Activated T-helper 2 cell treated with anti-CD3 and anti-CD28 coated beads, Interferon-gamma antibody, Interleukin-2, Interleukin-4, amounts not matched to agents 10 μg/mL and 5 μg/mL and 100 μg/mL, durations not matched to agents 14 hours and 24 hours and 36 hours (primary cell): ENCODE measurements at regions of chr6 and their contacts with region 1.

Region 1: GRCh38 chr6:111533087-111533784 is 50.2 kb upstream of the REV3L start:
- DNase-seq: peak; percentile 43
- H3K4me3 Mint-ChIP-seq: peak overlapping the region; percentile 30
- H3K27ac Mint-ChIP-seq: peak overlapping the region; percentile 50
- H3K4me1 Mint-ChIP-seq: peaks cover 35% of the 10 kb centered on the region
- H3K27me3 Mint-ChIP-seq: no peaks in the 10 kb centered on the region

Region 2: DNA sequence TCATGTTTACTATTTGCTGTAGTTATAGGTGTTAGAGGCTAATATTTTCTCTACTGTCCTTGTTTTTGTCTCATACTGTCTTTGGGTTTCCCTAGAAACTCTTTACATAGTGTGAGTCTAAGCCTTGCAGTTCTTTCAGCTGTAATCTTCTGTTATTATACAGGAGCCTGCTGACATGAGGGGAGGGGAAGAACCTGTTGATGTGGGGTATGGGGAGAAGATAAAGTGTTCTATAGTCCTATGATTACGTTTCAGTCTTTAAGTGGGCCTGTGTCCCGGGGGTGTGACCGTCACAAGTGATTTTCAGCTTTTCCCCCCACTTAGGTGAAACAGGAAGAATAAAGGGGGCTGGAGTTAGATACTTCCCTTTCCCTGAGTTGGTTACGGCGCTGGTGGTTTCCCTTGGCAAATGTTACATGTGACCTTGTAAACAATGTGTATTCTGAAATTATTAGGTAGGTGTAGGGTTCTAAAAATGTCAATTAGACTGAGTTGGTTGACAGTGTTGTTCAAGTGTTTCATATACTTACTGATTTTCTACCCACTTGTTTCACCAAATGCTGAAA is 91.5 kb before region 1 on chr6:
- intact Hi-C with region 1: no loop called
- DNase-seq: no peak
- H3K4me3 Mint-ChIP-seq: no peak overlapping the region
- H3K27ac Mint-ChIP-seq: no peak overlapping the region
- H3K4me1 Mint-ChIP-seq: peaks cover 22% of the 10 kb centered on the region
- H3K27me3 Mint-ChIP-seq: no peaks in the 10 kb centered on the region

Region 3: GRCh38 chr6:111558690-111559187 is 25.5 kb after region 1 on chr6:
- intact Hi-C with region 1: no loop called
- DNase-seq: no peak
- H3K4me3 Mint-ChIP-seq: no peak overlapping the region
- H3K27ac Mint-ChIP-seq: peak overlapping the region; percentile 46
- H3K4me1 Mint-ChIP-seq: peaks cover 35% of the 10 kb centered on the region
- H3K27me3 Mint-ChIP-seq: no peaks in the 10 kb centered on the region

Region 4: DNA sequence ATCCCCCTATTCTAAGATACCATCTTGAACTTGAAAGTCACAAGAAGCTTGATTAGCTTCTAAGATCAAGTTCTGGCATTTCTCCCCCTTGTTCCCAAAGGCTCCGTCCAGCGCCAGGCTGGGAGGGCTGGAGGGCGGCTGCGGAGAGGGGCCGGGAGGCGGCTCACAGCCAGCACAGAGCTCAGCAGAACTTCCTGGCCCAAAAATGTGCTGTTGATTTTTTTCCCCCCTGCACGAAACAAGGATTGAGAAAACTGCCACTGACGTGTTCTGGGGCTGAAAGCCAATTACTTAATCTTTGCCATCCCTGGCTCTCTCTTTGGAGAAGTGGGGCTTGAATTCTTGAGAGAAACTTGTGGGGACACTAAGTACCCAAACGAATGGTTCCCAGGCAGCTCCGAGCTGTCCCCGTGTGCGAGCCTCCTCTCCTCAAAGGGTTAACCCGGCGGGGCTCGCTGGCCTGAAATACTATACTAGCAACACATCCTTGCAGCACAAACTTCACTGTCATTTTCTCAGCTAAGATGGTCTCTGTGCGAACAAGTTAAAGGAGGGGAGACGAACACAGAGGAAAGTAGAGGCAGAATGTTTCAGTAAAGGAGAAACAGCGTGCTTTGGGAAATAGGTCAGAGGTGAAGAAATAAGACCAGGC is 72.0 kb after region 1 on chr6:
- intact Hi-C with region 1: loop called (anchors 2 kb)
- DNase-seq: peak; percentile 15
- H3K4me3 Mint-ChIP-seq: peak overlapping the region; percentile 90
- H3K27ac Mint-ChIP-seq: peak overlapping the region; percentile 98
- H3K4me1 Mint-ChIP-seq: peaks cover 49% of the 10 kb centered on the region
- H3K27me3 Mint-ChIP-seq: no peaks in the 10 kb centered on the region